Activated B cell treated with CpG ODN at 0.5 μM for 24 hours (primary cell): ENCODE measurements at regions of chr12 and their contacts with region 1.

Region 1: DNA sequence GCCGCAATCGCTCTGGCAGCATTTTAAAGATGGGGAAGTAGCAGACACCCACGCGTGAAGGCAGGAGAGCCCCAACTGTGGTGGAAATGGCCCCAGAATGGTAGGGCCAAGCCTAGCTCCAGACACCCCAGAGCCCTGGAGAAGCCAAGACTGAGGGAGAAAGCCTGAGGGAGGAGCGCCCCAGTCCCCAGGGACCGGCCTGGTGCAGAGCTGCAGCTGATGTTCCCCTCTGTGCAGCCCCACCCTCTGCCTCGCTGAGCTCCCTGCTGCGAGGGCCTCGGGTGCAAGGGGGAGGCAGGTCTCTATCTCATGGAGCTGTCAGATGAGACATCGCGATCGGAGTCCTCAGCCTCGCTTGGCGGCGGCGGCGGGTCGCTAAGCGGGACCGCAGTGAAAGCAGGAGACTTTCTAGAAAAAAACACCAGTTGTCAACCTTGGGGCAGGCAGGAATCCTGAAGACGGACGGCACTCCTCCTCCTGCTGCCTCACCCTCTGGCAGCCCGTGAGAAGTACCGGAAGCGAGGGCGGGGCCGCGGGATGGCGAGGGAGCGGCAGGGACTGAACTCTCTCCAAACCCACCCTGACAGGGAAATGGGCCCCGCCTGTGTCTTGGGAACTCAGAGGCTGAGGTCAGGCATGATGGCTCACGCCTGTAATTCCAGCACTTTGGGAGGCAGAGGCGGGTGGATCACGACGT is 6.0 kb downstream of the GAPDH start:
- DNase-seq: no peak
- ATAC-seq: peak; percentile 45
- H3K4me3 Mint-ChIP-seq: peak overlapping the region; percentile 77
- H3K27ac Mint-ChIP-seq: peak overlapping the region; percentile 74
- H3K4me1 Mint-ChIP-seq: peaks cover 46% of the 10 kb centered on the region
- H3K27me3 Mint-ChIP-seq: no peaks in the 10 kb centered on the region
- CTCF ChIP-seq: no peak

Region 2: DNA sequence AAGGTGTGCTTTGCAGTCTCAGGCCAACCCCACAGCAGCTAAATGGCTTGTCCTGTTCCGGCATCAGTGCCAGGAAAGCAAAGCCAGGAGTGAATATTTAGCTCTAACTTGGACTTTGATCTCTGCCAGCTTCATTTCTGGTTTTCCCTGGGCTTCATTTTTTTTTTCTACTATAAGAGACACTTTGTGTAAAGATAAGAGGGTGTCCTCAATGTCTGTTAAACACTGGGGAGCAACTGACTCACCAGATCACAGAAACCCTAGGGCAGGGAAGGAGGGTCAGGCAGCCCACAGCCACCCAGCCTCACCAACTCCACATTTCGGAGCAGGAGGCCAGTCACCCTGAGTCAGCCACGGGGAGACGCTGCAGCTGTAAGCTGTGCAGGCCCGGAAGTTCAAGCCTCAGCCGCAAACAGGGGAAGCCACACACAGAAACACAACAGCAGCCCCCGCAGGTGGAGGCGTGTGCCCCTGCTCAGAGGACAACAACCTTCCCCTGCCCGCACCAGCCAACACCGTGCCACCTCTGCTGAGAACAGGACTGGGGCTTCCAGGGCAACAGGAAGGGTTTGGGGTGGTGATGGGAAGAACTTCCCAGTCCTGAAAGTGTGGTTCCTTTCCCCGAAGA is 204.8 kb before region 1 on chr12:
- CTCF ChIA-PET with region 1: no interaction called
- POLR2A ChIA-PET with region 1: no interaction called
- intact Hi-C with region 1: loop called (anchors 1 kb)
- DNase-seq: no peak
- ATAC-seq: peak; percentile 83
- H3K4me3 Mint-ChIP-seq: peak overlapping the region; percentile 29
- H3K27ac Mint-ChIP-seq: no peak overlapping the region
- H3K4me1 Mint-ChIP-seq: peaks cover 5% of the 10 kb centered on the region
- H3K27me3 Mint-ChIP-seq: peaks cover 44% of the 10 kb centered on the region
- CTCF ChIP-seq: no peak

Region 3: GRCh38 chr12:6730169-6730568 is 189.8 kb after region 1 on chr12:
- CTCF ChIA-PET with region 1: no interaction called
- POLR2A ChIA-PET with region 1: no interaction called
- intact Hi-C with region 1: no loop called
- DNase-seq: no peak
- ATAC-seq: no peak
- H3K4me3 Mint-ChIP-seq: no peak overlapping the region
- H3K27ac Mint-ChIP-seq: no peak overlapping the region
- H3K4me1 Mint-ChIP-seq: peaks cover 11% of the 10 kb centered on the region
- H3K27me3 Mint-ChIP-seq: no peaks in the 10 kb centered on the region
- CTCF ChIP-seq: no peak